ENCODE measurements at regions of chr19 and their contacts with region 1.

Region 1: GRCh38 chr19:13262450-13262849 is 112.2 kb downstream of the IER2 start:
- DNase-seq: peak; percentile 61
- ATAC-seq: peak; percentile 88
- H3K4me3 ChIP-seq: no peak overlapping the region
- H3K27ac ChIP-seq: no peak overlapping the region
- H3K4me1 ChIP-seq: peaks cover 6% of the 10 kb centered on the region
- H3K27me3 ChIP-seq: peaks cover 3% of the 10 kb centered on the region
- CTCF ChIP-seq: peak; percentile 66
- POLR2A ChIP-seq: no peak
- RAD21 ChIP-seq: peak; percentile 67

Region 2: GRCh38 chr19:13117772-13118423 is 144.6 kb before region 1 on chr19 and contains the start of gene NACC1:
- CTCF ChIA-PET with region 1: interaction called, 7 read pairs
- POLR2A ChIA-PET with region 1: no interaction called
- dilution Hi-C with region 1: no loop called
- in situ Hi-C with region 1: no loop called
- intact Hi-C with region 1: loop called (anchors 5 kb)
- DNase-seq: peak; percentile 82
- ATAC-seq: peak; percentile 89
- H3K4me3 ChIP-seq: peak within 1 kb of the TSS; percentile 99
- H3K27ac ChIP-seq: peak within 1 kb of the TSS; percentile 97
- H3K4me1 ChIP-seq: peaks cover 25% of the 10 kb centered on the region
- H3K27me3 ChIP-seq: no peaks in the 10 kb centered on the region
- CTCF ChIP-seq: no peak
- POLR2A ChIP-seq: no peak
- RAD21 ChIP-seq: no peak
- total RNA-seq, gene NACC1: 42.5 and 56.7 TPM in 2 replicates

Region 3: DNA sequence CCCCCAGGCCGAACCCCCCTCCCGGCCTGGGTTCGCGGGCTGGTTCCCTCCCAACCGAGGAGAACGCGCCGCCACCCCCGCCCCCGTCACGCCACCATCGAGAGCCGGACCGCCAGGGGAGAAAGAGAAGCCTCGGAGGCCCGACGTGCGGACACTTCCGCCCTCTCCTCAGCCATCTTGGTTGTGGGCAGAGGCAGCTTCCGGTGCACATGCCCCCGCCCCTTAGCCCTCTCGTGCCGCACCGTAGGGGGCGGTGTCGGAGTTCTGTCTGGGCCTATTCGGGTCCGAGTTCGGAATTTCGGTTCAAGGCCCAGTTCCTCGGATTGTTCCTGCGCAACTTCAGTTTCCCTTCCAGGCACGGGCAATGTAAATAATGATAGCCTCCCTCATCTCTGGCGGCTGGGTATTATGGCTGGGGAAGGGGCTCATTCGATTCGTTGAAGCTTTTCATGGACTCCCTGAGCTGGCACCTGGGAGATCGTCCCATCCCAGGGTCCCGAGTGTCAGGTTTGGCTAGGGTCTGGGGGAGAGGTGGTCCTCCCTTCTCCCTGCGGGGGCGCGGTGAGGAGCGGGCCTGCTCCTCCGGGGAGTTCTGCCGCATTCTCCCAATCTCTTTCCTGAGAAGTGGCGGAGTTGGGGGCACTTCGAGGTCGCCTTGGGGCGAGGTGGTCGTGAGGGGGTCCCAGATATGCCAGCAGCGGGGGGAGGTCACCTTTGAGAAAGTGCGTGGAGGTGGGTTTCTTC is 112.1 kb before region 1 on chr19 and contains the starts of genes IER2 and STX10:
- CTCF ChIA-PET with region 1: no interaction called
- POLR2A ChIA-PET with region 1: interaction called, 3 read pairs
- dilution Hi-C with region 1: no loop called
- in situ Hi-C with region 1: no loop called
- intact Hi-C with region 1: loop called (anchors 1 kb)
- DNase-seq: peak; percentile 94
- ATAC-seq: peak; percentile 51
- H3K4me3 ChIP-seq: peak within 1 kb of the TSS; percentile 72
- H3K27ac ChIP-seq: peak within 1 kb of the TSS; percentile 97
- H3K4me1 ChIP-seq: peaks cover 8% of the 10 kb centered on the region
- H3K27me3 ChIP-seq: no peaks in the 10 kb centered on the region
- CTCF ChIP-seq: peak; percentile 64
- POLR2A ChIP-seq: peak; percentile 87
- RAD21 ChIP-seq: peak; percentile 43
- total RNA-seq, gene IER2: 7.7 and 17.5 TPM in 2 replicates
- total RNA-seq, gene STX10: 64.9 and 76.7 TPM in 2 replicates

Region 4: GRCh38 chr19:13155472-13156359 is 106.7 kb before region 1 on chr19:
- CTCF ChIA-PET with region 1: no interaction called
- POLR2A ChIA-PET with region 1: interaction called, 3 read pairs
- dilution Hi-C with region 1: no loop called
- in situ Hi-C with region 1: no loop called
- intact Hi-C with region 1: loop called (anchors 1 kb)
- DNase-seq: peak; percentile 76
- ATAC-seq: peak; percentile 3
- H3K4me3 ChIP-seq: peak overlapping the region; percentile 82
- H3K27ac ChIP-seq: peak overlapping the region; percentile 80
- H3K4me1 ChIP-seq: peaks cover 13% of the 10 kb centered on the region
- H3K27me3 ChIP-seq: no peaks in the 10 kb centered on the region
- CTCF ChIP-seq: no peak
- POLR2A ChIP-seq: peak; percentile 89
- RAD21 ChIP-seq: no peak

Region 5: DNA sequence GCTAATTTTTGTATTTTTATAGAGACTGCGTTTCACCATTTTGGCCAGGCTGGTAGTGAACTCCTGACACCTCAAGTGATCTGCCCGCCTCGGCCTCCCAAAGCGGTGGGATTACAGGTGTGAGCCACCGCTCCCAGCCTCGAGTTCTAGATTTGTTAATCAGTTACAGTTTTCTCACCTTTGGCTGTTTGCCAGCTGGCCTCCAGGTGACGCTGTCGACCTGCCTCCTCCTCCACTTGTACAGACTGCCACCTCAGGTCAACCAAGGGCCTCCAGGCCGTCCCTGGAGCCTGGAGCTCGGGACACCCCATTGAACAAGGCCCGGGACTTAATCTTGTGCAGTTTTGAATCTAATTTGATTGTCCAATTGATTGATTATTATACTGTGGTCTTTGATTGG is 66.8 kb before region 1 on chr19:
- CTCF ChIA-PET with region 1: no interaction called
- POLR2A ChIA-PET with region 1: no interaction called
- dilution Hi-C with region 1: no loop called
- in situ Hi-C with region 1: no loop called
- intact Hi-C with region 1: loop called (anchors 1 kb)
- DNase-seq: no peak
- ATAC-seq: no peak
- H3K4me3 ChIP-seq: no peak overlapping the region
- H3K27ac ChIP-seq: no peak overlapping the region
- H3K4me1 ChIP-seq: no peaks in the 10 kb centered on the region
- H3K27me3 ChIP-seq: no peaks in the 10 kb centered on the region
- CTCF ChIP-seq: no peak
- POLR2A ChIP-seq: no peak
- RAD21 ChIP-seq: no peak

Region 6: DNA sequence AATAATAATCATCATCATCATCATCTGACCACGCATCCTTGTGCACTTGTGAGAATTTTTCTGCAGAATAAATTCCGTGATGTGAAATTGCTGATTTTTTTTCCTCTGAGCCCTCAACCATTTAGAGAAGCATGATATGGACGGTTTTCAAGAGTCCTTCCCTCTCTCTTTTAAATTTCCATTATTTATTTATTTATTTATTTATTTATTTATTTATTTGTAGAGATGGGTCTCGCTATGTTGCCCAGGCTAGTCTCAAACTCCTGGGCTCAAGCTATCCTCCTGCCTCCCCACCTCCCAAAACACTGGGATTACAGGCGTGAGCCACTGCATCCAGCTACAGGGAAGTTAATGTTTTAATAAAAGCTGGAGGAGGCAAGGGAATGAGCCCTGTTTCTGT is 204.2 kb after region 1 on chr19:
- CTCF ChIA-PET with region 1: no interaction called
- POLR2A ChIA-PET with region 1: no interaction called
- dilution Hi-C with region 1: no loop called
- in situ Hi-C with region 1: no loop called
- intact Hi-C with region 1: no loop called
- DNase-seq: no peak
- ATAC-seq: no peak
- H3K4me3 ChIP-seq: no peak overlapping the region
- H3K27ac ChIP-seq: no peak overlapping the region
- H3K4me1 ChIP-seq: no peaks in the 10 kb centered on the region
- H3K27me3 ChIP-seq: no peaks in the 10 kb centered on the region
- CTCF ChIP-seq: no peak
- POLR2A ChIP-seq: no peak
- RAD21 ChIP-seq: no peak

Measured in IMR-90 (cell line).